Caco-2 (cell line): ENCODE measurements at regions of chr7 and their contacts with region 1.

Region 1: GRCh38 chr7:51455948-51456347 is 139.3 kb upstream of the COBL start:
- DNase-seq: no peak
- H3K4me3 ChIP-seq: no peak overlapping the region
- H3K4me3 Mint-ChIP-seq: no peak overlapping the region
- H3K27ac Mint-ChIP-seq: no peak overlapping the region
- H3K4me1 ChIP-seq: peaks cover 13% of the 10 kb centered on the region; the same call in 1 of the 2 replicates
- H3K4me1 Mint-ChIP-seq: peaks cover 27% of the 10 kb centered on the region
- H3K27me3 ChIP-seq: no peaks in the 10 kb centered on the region
- H3K27me3 Mint-ChIP-seq: no peaks in the 10 kb centered on the region
- CTCF ChIP-seq: no peak

Region 2: GRCh38 chr7:51141451-51142003 is 314.4 kb before region 1 on chr7:
- CTCF ChIA-PET with region 1: no interaction called
- POLR2A ChIA-PET with region 1: no interaction called
- intact Hi-C with region 1: no loop called
- DNase-seq: peak in 1 of 2 experiments; percentile 38
- H3K4me3 ChIP-seq: no peak overlapping the region
- H3K4me3 Mint-ChIP-seq: no peak overlapping the region
- H3K27ac Mint-ChIP-seq: no peak overlapping the region
- H3K4me1 ChIP-seq: no peaks in the 10 kb centered on the region
- H3K4me1 Mint-ChIP-seq: no peaks in the 10 kb centered on the region
- H3K27me3 ChIP-seq: no peaks in the 10 kb centered on the region
- H3K27me3 Mint-ChIP-seq: no peaks in the 10 kb centered on the region
- CTCF ChIP-seq: peak; percentile 37 to 44

Region 3: DNA sequence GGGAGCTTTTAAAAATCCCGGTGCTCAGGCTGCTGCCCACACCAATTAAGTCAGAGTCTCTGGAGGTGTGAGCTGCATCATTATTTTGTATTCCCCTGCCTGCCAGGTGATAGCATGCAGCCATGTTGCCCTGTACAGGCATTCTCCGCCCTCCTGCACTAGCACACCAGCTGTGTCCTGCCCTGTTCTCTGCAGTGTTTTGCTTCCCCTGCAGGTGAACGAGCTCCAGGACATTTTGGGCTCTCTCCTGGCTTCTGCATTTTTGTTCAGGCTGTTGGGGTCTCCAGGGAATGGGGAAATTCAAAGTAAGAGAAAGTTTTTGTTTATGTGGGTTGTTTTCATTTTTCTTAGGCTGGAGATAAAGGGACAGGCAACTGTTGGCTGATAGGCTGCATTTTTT is 131.7 kb after region 1 on chr7:
- CTCF ChIA-PET with region 1: no interaction called
- POLR2A ChIA-PET with region 1: no interaction called
- intact Hi-C with region 1: loop called (anchors 5 kb)
- DNase-seq: no peak
- H3K4me3 ChIP-seq: no peak overlapping the region
- H3K4me3 Mint-ChIP-seq: no peak overlapping the region
- H3K27ac Mint-ChIP-seq: no peak overlapping the region
- H3K4me1 ChIP-seq: 0 out of 2 replicates have a peak, but pooled peaks cover 6% of the 10 kb centered on the region
- H3K4me1 Mint-ChIP-seq: peaks cover 12% of the 10 kb centered on the region
- H3K27me3 ChIP-seq: no peaks in the 10 kb centered on the region
- H3K27me3 Mint-ChIP-seq: no peaks in the 10 kb centered on the region
- CTCF ChIP-seq: peak in 1 of 2 experiments; percentile 6

Region 4: GRCh38 chr7:51647931-51648351 is 192.0 kb after region 1 on chr7:
- CTCF ChIA-PET with region 1: no interaction called
- POLR2A ChIA-PET with region 1: no interaction called
- intact Hi-C with region 1: loop called (anchors 10 kb)
- DNase-seq: peak; percentile 82 to 83
- H3K4me3 ChIP-seq: peak overlapping the region; percentile 29
- H3K4me3 Mint-ChIP-seq: peak overlapping the region; percentile 56
- H3K27ac Mint-ChIP-seq: peak overlapping the region; percentile 64
- H3K4me1 ChIP-seq: peaks cover 15% of the 10 kb centered on the region
- H3K4me1 Mint-ChIP-seq: peaks cover 21% of the 10 kb centered on the region
- H3K27me3 ChIP-seq: no peaks in the 10 kb centered on the region
- H3K27me3 Mint-ChIP-seq: no peaks in the 10 kb centered on the region
- CTCF ChIP-seq: no peak